GM12878 (cell line): ENCODE measurements at regions of chr3 and their contacts with region 1.

Region 1: GRCh38 chr3:171772427-171773056 is 37.7 kb downstream of the PLD1 start:
- DNase-seq: no peak
- ATAC-seq: peak; percentile 62
- H3K4me3 ChIP-seq: no peak overlapping the region
- H3K27ac ChIP-seq: no peak overlapping the region
- H3K4me1 ChIP-seq: no peaks in the 10 kb centered on the region
- H3K27me3 ChIP-seq: no peaks in the 10 kb centered on the region
- CTCF ChIP-seq: peak; percentile 63 to 79 (median 70)
- EP300 ChIP-seq: no peak
- POLR2A ChIP-seq: no peak
- RAD21 ChIP-seq: peak; percentile 80

Region 2: GRCh38 chr3:171049861-171050444 is 722.6 kb before region 1 on chr3:
- CTCF ChIA-PET with region 1: interaction called, 8 read pairs
- POLR2A ChIA-PET with region 1: no interaction called
- RAD21 ChIA-PET with region 1: interaction called, 3 read pairs
- SMC1A ChIA-PET with region 1: interaction called, 13 read pairs
- in situ Hi-C with region 1: no loop called
- intact Hi-C with region 1: loop called (anchors 10 kb)
- DNase-seq: peak; percentile 34
- ATAC-seq: peak; percentile 91
- H3K4me3 ChIP-seq: no peak overlapping the region
- H3K27ac ChIP-seq: no peak overlapping the region
- H3K4me1 ChIP-seq: no peaks in the 10 kb centered on the region
- H3K27me3 ChIP-seq: no peaks in the 10 kb centered on the region
- CTCF ChIP-seq: peak; percentile 65 to 81 (median 72)
- EP300 ChIP-seq: no peak
- POLR2A ChIP-seq: no peak
- RAD21 ChIP-seq: peak; percentile 87

Region 3: DNA sequence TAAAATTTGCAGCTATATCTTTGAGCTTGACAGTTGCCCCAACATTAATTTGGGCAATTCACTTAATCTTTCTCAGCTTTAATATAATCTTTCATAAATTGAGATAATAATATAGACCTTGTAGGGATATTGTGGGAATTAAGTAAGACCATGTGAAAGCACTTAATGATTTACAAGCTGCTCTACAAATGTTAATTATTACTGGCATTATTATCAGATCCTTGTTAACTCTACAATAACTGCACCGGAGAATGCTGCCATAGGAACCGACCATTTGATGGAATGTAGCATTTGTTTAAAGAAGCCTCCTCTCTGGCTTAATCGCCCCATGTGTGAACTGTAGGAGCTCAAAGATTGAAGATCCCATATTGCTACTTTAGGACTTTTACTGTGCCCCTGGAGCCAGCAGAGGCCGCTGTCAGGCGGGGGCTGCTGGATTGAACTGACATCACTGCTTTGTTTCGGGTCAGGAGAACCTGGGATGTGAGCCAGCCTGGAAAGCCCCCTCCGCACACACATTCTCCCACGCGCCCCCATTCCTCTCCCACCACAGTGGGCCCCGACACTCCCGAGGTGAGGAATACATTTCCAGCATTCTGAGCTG is 158.1 kb before region 1 on chr3:
- CTCF ChIA-PET with region 1: interaction called, 94 read pairs
- POLR2A ChIA-PET with region 1: interaction called, 3 read pairs
- RAD21 ChIA-PET with region 1: interaction called, 82 read pairs
- SMC1A ChIA-PET with region 1: interaction called, 59 read pairs
- in situ Hi-C with region 1: no loop called
- intact Hi-C with region 1: loop called (anchors 1 kb)
- DNase-seq: no peak
- ATAC-seq: peak; percentile 83
- H3K4me3 ChIP-seq: no peak overlapping the region
- H3K27ac ChIP-seq: no peak overlapping the region
- H3K4me1 ChIP-seq: no peaks in the 10 kb centered on the region
- H3K27me3 ChIP-seq: no peaks in the 10 kb centered on the region; a peak in 1 of 4 replicates
- CTCF ChIP-seq: peak; percentile 64 to 83 (median 67)
- EP300 ChIP-seq: no peak
- POLR2A ChIP-seq: no peak
- RAD21 ChIP-seq: peak; percentile 63

Region 4: GRCh38 chr3:171666516-171666915 is 106.0 kb before region 1 on chr3:
- CTCF ChIA-PET with region 1: interaction called, 23 read pairs
- POLR2A ChIA-PET with region 1: no interaction called
- RAD21 ChIA-PET with region 1: interaction called, 6 read pairs
- SMC1A ChIA-PET with region 1: interaction called, 20 read pairs
- in situ Hi-C with region 1: no loop called
- intact Hi-C with region 1: no loop called
- DNase-seq: no peak
- ATAC-seq: no peak
- H3K4me3 ChIP-seq: no peak overlapping the region
- H3K27ac ChIP-seq: no peak overlapping the region
- H3K4me1 ChIP-seq: no peaks in the 10 kb centered on the region
- H3K27me3 ChIP-seq: no peaks in the 10 kb centered on the region
- CTCF ChIP-seq: no peak
- EP300 ChIP-seq: no peak
- POLR2A ChIP-seq: no peak
- RAD21 ChIP-seq: no peak

Region 5: DNA sequence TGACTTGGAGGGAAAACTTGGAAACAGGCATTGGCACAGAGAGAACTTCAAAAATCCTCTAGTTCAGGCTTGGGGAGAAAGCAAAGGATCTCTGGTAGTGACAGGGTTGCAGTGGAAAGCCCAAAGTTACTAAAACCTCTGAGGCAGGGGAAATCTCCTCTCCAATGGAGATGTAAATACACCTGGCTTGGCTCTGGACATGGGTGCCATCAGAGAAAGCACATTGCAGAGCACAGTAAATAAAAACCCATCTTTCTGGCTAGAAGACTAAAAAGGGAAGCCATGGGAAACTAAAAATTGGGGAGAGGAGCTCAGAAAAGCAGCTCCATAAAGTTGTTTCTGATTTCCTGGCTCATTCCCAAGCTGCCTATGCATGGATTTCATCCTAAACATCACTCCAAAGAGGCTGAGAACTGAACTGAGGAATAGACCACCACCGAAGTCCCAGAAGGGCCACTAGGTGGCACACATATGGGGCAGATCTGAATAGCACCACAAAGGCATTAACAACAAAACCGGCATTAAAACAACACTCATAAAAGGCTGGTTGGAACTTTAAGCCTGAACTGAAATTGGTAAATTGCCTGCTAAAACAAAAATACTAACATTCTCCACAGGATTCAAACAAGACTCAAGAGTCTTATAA is 68.7 kb before region 1 on chr3:
- CTCF ChIA-PET with region 1: interaction called, 37 read pairs
- POLR2A ChIA-PET with region 1: interaction called, 3 read pairs
- RAD21 ChIA-PET with region 1: interaction called, 11 read pairs
- SMC1A ChIA-PET with region 1: interaction called, 14 read pairs
- in situ Hi-C with region 1: no loop called
- intact Hi-C with region 1: loop called (anchors 5 kb)
- DNase-seq: no peak
- ATAC-seq: peak; percentile 74
- H3K4me3 ChIP-seq: no peak overlapping the region
- H3K27ac ChIP-seq: no peak overlapping the region
- H3K4me1 ChIP-seq: no peaks in the 10 kb centered on the region
- H3K27me3 ChIP-seq: no peaks in the 10 kb centered on the region; a peak in 1 of 4 replicates
- CTCF ChIP-seq: peak; percentile 24 to 63 (median 41); a peak in 4 of 6 replicates
- EP300 ChIP-seq: no peak
- POLR2A ChIP-seq: no peak
- RAD21 ChIP-seq: peak; percentile 55

Region 6: DNA sequence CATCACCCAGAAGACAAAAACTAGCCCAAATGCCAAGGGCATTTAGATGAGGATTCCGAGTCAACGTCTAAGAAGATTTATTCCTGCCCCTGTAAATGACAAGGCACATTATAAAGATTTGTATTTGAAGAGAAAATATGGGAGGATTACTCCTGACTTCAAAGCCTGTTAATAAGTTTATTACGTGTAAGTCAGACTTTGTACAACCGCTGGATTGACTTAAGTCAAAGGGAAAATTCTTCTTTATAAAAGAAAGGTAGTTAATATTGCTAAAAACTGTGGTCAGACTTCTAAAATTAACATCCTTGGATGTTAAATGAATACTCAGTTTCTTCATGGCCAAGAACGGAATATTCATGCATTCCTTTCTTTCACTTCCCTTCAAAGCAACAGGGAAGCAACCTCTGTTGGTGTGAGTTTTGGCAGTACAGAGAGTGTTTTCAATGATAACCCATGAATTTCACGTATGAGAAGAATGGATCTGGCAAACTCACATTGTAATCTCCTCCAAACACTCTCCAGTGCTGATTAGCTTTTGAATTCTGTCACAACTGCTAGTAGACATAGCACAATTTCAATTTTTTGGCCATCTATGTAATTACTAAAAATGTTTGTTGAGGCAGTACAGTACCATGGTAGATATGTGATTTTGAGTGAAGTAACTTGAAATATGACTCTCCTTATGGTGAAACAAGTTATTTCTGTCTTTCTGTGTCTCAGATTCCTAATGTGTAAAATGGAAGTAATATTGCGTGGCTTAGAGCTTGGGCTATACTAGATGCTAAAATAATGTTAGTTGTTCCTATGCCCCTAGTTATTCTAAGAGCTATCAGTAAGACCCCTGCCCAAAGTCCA is 24.3 kb before region 1 on chr3:
- CTCF ChIA-PET with region 1: interaction called, 210 read pairs
- POLR2A ChIA-PET with region 1: interaction called, 3 read pairs
- RAD21 ChIA-PET with region 1: interaction called, 15 read pairs
- SMC1A ChIA-PET with region 1: interaction called, 192 read pairs
- in situ Hi-C with region 1: no loop called
- intact Hi-C with region 1: no loop called
- DNase-seq: no peak
- ATAC-seq: no peak
- H3K4me3 ChIP-seq: no peak overlapping the region
- H3K27ac ChIP-seq: no peak overlapping the region
- H3K4me1 ChIP-seq: no peaks in the 10 kb centered on the region
- H3K27me3 ChIP-seq: no peaks in the 10 kb centered on the region; a peak in 1 of 4 replicates
- CTCF ChIP-seq: no peak
- EP300 ChIP-seq: no peak
- POLR2A ChIP-seq: no peak
- RAD21 ChIP-seq: no peak

Region 7: DNA sequence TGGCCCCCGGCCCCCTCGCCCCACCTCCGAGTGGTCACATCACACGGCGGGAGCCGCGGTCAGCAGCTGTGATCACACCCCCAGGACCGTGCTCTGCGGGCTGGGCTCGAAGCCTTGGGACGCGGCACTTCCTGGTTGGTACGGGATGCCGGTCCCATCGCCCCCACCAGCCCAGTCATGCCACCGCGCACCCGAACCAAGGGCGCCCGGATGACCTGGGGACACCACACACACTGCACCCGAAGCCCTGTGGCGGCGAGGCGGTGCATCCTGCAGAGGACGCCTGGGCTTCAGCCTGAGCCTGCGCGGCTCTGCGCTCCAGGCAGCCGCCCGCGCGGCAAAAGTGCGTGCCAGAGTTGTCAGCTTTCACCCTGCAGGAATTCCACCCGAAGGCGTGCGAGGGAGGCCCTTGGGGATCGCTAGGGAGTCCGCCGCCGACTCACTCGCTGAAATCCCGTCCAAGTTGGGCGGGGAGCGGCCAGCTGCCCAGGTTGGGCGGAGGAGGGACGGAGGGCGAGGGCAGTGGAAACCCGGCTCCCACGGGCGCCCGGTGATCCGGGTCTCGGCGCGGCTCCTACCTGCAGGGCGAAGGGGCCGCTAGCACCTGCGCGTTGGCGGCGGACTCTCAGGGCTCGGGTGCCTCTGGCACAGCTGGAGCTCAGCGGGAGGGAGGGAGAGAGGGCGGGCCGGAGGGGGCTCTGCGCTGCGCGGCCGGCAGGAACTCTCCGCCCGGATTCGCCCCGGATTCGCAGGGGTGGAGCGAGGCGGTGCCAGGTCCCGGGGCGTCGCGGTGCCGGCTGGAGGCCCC is 37.5 kb after region 1 on chr3 and contains the start of gene PLD1:
- CTCF ChIA-PET with region 1: interaction called, 16 read pairs
- POLR2A ChIA-PET with region 1: interaction called, 4 read pairs
- RAD21 ChIA-PET with region 1: interaction called, 26 read pairs
- SMC1A ChIA-PET with region 1: interaction called, 44 read pairs
- in situ Hi-C with region 1: no loop called
- intact Hi-C with region 1: no loop called
- DNase-seq: no peak
- ATAC-seq: peak; percentile 72
- H3K4me3 ChIP-seq: peak within 1 kb of the TSS; percentile 69
- H3K27ac ChIP-seq: peak within 1 kb of the TSS; percentile 45
- H3K4me1 ChIP-seq: no peaks in the 10 kb centered on the region
- H3K27me3 ChIP-seq: no peaks in the 10 kb centered on the region
- CTCF ChIP-seq: 0 out of 6 replicates have a peak, but pooled peaks of 1 of the 3 experiments have one; percentile 5
- EP300 ChIP-seq: peak; percentile 6 to 12; a peak in 2 of 4 replicates
- POLR2A ChIP-seq: no peak
- RAD21 ChIP-seq: no peak
- polyA plus RNA-seq, gene PLD1: 3.1 to 3.4 TPM